A673 (cell line): ENCODE measurements at regions of chr20 and their contacts with region 1.

Region 1: GRCh38 chr20:401682-402495 is 6.2 kb upstream of the RBCK1 start:
- DNase-seq: no peak
- H3K4me3 ChIP-seq: no peak overlapping the region
- H3K27ac ChIP-seq: no peak overlapping the region
- H3K4me1 ChIP-seq: peaks cover 12% of the 10 kb centered on the region
- H3K27me3 ChIP-seq: no peaks in the 10 kb centered on the region
- CTCF ChIP-seq: no peak

Region 2: DNA sequence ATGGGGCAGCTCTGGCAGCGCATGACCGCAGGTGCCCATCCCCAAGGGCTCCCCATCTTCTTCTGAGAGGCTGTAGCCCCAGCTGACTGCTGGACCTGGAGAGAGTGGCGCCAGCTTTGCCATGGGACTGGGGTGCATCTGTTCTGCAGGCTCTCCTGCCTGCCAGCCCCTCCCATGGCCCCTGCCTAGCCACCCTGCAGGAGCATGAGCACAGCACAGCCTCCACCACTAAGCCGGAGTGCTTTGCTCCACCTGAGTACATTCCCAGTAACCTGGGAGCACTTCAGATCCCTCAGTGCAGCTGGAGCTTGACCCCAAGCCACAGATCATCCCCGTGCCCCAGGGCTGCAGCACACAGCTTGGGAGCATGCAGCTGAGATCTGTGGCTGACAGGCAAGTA is 298.4 kb before region 1 on chr20:
- CTCF ChIA-PET with region 1: interaction called, 10 read pairs
- POLR2A ChIA-PET with region 1: no interaction called
- intact Hi-C with region 1: no loop called
- DNase-seq: no peak
- H3K4me3 ChIP-seq: no peak overlapping the region
- H3K27ac ChIP-seq: no peak overlapping the region
- H3K4me1 ChIP-seq: no peaks in the 10 kb centered on the region
- H3K27me3 ChIP-seq: peaks cover 58% of the 10 kb centered on the region
- CTCF ChIP-seq: no peak

Region 3: GRCh38 chr20:387520-387919 is 14.4 kb before region 1 on chr20:
- CTCF ChIA-PET with region 1: no interaction called
- POLR2A ChIA-PET with region 1: interaction called, 11 read pairs
- intact Hi-C with region 1: no loop called
- DNase-seq: no peak
- H3K4me3 ChIP-seq: no peak overlapping the region
- H3K27ac ChIP-seq: no peak overlapping the region
- H3K4me1 ChIP-seq: peaks cover 15% of the 10 kb centered on the region
- H3K27me3 ChIP-seq: no peaks in the 10 kb centered on the region
- CTCF ChIP-seq: no peak

Region 4: DNA sequence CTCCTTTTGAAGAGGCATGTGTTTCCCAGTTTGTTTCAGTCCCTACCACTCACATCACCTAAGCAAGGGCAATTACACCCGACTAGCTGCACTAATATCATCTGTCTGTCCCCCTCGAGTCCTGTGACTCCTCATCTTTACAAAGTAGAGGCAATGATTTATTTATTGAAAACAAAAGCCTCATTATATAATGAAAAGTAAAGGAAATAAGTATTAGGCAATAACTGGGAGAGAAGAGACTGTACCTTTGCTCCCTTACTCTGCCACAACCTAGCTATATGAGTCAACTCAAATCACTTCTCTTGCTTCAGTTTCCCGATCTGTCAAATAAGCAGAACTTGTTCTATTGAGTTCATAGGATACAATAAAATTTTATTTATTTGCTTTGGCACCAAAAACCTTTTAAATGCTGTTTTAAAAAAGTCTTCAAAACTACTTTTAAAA is 102.8 kb after region 1 on chr20:
- CTCF ChIA-PET with region 1: no interaction called
- POLR2A ChIA-PET with region 1: no interaction called
- intact Hi-C with region 1: no loop called
- DNase-seq: no peak
- H3K4me3 ChIP-seq: no peak overlapping the region
- H3K27ac ChIP-seq: no peak overlapping the region
- H3K4me1 ChIP-seq: no peaks in the 10 kb centered on the region
- H3K27me3 ChIP-seq: no peaks in the 10 kb centered on the region
- CTCF ChIP-seq: no peak